SK-N-SH (cell line): ENCODE measurements at regions of chr20 and their contacts with region 1.

Region 1: GRCh38 chr20:50987592-50988210 is 29.1 kb downstream of the MOCS3 start:
- DNase-seq: peak; percentile 79
- H3K4me3 ChIP-seq: no peak overlapping the region; a peak in 1 of 4 replicates
- H3K27ac ChIP-seq: peak overlapping the region in 1 of 2 experiments; percentile 32; a peak in 1 of 4 replicates
- H3K4me1 ChIP-seq: no peaks in the 10 kb centered on the region
- H3K27me3 ChIP-seq: no peaks in the 10 kb centered on the region
- CTCF ChIP-seq: peak; percentile 85
- EP300 ChIP-seq: no peak
- RAD21 ChIP-seq: peak; percentile 99

Region 2: DNA sequence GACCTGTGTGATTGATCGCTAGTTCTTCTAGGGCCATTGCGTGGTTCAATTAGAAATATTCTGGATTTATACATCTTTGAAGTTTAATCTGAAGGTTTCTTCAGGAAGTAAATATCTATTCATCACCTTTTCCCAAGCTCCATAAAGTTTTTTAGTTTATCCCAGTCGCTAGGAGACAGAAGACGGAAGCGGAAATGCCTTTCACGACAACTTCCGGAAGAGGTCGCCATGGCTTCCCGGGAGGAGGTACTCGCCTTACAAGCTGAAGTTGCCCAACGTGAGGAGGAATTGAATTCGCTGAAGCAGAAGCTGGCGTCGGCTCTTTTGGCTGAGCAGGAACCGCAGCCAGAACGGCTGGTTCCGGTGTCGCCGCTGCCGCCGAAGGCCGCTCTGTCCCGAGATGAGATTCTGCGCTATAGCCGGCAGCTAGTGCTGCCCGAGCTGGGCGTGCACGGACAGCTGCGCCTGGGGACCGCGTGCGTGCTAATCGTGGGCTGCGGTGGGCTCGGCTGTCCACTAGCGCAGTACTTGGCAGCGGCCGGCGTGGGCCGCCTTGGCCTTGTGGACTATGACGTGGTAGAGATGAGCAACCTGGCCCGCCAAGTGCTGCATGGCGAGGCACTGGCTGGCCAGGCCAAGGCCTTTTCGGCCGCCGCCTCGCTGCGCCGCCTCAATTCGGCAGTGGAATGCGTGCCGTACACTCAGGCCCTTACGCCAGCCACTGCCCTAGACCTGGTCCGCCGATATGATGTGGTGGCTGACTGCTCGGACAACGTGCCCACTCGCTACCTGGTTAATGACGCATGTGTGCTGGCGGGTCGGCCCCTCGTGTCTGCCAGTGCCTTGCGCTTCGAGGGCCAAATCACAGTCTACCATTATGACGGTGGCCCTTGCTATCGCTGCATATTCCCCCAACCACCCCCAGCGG is 28.8 kb before region 1 on chr20 and contains the start of gene MOCS3:
- CTCF ChIA-PET with region 1: interaction called, 11 read pairs
- POLR2A ChIA-PET with region 1: no interaction called
- DNase-seq: peak; percentile 86
- H3K4me3 ChIP-seq: peak within 1 kb of the TSS; percentile 98 to 100
- H3K27ac ChIP-seq: peak within 1 kb of the TSS; percentile 91 to 96
- H3K4me1 ChIP-seq: peaks cover 18 to 22% of the 10 kb centered on the region in 2 experiments
- H3K27me3 ChIP-seq: no peaks in the 10 kb centered on the region
- CTCF ChIP-seq: no peak
- EP300 ChIP-seq: 0 out of 4 replicates have a peak, but pooled peaks of 1 of the 2 experiments have one; percentile 32
- RAD21 ChIP-seq: no peak
- polyA plus RNA-seq, gene MOCS3: 4.0 and 4.4 TPM in 2 replicates

Region 3: GRCh38 chr20:51014797-51015722 is 27.4 kb after region 1 on chr20:
- CTCF ChIA-PET with region 1: interaction called, 118 read pairs
- POLR2A ChIA-PET with region 1: no interaction called
- DNase-seq: peak; percentile 87
- H3K4me3 ChIP-seq: no peak overlapping the region
- H3K27ac ChIP-seq: no peak overlapping the region; a peak in 1 of 4 replicates
- H3K4me1 ChIP-seq: peaks cover 0 to 34% of the 10 kb centered on the region in 2 experiments; a peak in 1 of 4 replicates
- H3K27me3 ChIP-seq: no peaks in the 10 kb centered on the region
- CTCF ChIP-seq: peak; percentile 81
- EP300 ChIP-seq: no peak
- RAD21 ChIP-seq: peak; percentile 83

Region 4: GRCh38 chr20:51306503-51307358 is 319.0 kb after region 1 on chr20:
- CTCF ChIA-PET with region 1: interaction called, 452 read pairs
- POLR2A ChIA-PET with region 1: interaction called, 4 read pairs
- DNase-seq: peak; percentile 90
- H3K4me3 ChIP-seq: peak overlapping the region in 1 of 2 experiments; percentile 35; a peak in 1 of 4 replicates
- H3K27ac ChIP-seq: peak overlapping the region in 1 of 2 experiments; percentile 22; a peak in 1 of 4 replicates
- H3K4me1 ChIP-seq: peaks cover 0 to 13% of the 10 kb centered on the region in 2 experiments; a peak in 1 of 4 replicates
- H3K27me3 ChIP-seq: no peaks in the 10 kb centered on the region
- CTCF ChIP-seq: peak; percentile 88
- EP300 ChIP-seq: no peak
- RAD21 ChIP-seq: peak; percentile 98

Region 5: GRCh38 chr20:51333971-51334370 is 346.3 kb after region 1 on chr20:
- CTCF ChIA-PET with region 1: interaction called, 163 read pairs
- POLR2A ChIA-PET with region 1: no interaction called
- DNase-seq: no peak
- H3K4me3 ChIP-seq: no peak overlapping the region
- H3K27ac ChIP-seq: peak overlapping the region in 1 of 2 experiments; percentile 100; a peak in 2 of 4 replicates
- H3K4me1 ChIP-seq: peaks cover 0 to 10% of the 10 kb centered on the region in 2 experiments; a peak in 3 of 4 replicates
- H3K27me3 ChIP-seq: no peaks in the 10 kb centered on the region
- CTCF ChIP-seq: no peak
- EP300 ChIP-seq: no peak
- RAD21 ChIP-seq: no peak

Region 6: DNA sequence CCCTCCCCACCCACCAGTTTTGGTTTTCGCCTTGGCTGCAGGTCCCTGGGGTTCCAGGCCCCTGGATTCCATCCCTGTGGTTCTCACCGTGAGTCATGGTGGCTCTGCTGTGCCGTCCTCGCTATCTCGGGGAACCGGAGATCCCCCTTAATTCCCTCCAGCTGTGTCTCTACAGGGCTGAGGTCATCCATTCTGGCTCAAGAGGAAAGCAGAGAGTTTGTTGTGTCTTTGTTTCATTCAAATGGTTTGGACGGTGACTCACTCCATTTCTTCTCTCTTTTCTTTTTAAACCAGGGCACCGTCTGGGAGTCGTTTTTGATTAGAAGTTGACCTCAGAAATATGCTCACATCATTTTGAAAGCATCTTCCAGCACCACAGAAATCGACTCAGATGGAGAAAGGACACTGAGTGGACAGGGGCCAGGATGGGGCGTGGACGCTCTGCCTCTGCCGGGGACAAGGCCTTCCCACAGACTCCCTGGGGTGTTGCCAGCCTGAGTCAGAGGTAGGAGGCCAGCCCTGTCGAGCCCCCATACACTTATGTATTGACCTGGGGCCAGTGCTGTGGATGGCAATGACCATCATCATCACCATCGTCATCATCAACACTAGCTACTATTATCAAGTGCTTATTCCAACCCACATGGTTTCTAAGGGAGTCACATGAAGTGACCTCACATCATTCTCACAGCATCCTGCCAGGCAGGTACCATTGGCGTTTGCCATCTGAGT is 378.6 kb after region 1 on chr20:
- CTCF ChIA-PET with region 1: interaction called, 27 read pairs
- POLR2A ChIA-PET with region 1: no interaction called
- DNase-seq: no peak
- H3K4me3 ChIP-seq: no peak overlapping the region
- H3K27ac ChIP-seq: peak overlapping the region; percentile 58 to 100; a peak in 3 of 4 replicates
- H3K4me1 ChIP-seq: peaks cover 4 to 23% of the 10 kb centered on the region in 2 experiments; a peak in 3 of 4 replicates
- H3K27me3 ChIP-seq: no peaks in the 10 kb centered on the region
- CTCF ChIP-seq: no peak
- EP300 ChIP-seq: peak; percentile 2 to 96; a peak in 3 of 4 replicates
- RAD21 ChIP-seq: no peak

Region 7: GRCh38 chr20:51595058-51595532 is 607.4 kb after region 1 on chr20:
- CTCF ChIA-PET with region 1: interaction called, 31 read pairs
- POLR2A ChIA-PET with region 1: no interaction called
- DNase-seq: peak; percentile 83
- H3K4me3 ChIP-seq: no peak overlapping the region; a peak in 1 of 4 replicates
- H3K27ac ChIP-seq: peak overlapping the region in 1 of 2 experiments; percentile 50; a peak in 1 of 4 replicates
- H3K4me1 ChIP-seq: peaks cover 6 to 12% of the 10 kb centered on the region in 2 experiments; a peak in 2 of 4 replicates
- H3K27me3 ChIP-seq: no peaks in the 10 kb centered on the region
- CTCF ChIP-seq: peak; percentile 90
- EP300 ChIP-seq: no peak
- RAD21 ChIP-seq: peak; percentile 96